PC-9 (cell line): ENCODE measurements at regions of chr2 and their contacts with region 1.

Region 1: DNA sequence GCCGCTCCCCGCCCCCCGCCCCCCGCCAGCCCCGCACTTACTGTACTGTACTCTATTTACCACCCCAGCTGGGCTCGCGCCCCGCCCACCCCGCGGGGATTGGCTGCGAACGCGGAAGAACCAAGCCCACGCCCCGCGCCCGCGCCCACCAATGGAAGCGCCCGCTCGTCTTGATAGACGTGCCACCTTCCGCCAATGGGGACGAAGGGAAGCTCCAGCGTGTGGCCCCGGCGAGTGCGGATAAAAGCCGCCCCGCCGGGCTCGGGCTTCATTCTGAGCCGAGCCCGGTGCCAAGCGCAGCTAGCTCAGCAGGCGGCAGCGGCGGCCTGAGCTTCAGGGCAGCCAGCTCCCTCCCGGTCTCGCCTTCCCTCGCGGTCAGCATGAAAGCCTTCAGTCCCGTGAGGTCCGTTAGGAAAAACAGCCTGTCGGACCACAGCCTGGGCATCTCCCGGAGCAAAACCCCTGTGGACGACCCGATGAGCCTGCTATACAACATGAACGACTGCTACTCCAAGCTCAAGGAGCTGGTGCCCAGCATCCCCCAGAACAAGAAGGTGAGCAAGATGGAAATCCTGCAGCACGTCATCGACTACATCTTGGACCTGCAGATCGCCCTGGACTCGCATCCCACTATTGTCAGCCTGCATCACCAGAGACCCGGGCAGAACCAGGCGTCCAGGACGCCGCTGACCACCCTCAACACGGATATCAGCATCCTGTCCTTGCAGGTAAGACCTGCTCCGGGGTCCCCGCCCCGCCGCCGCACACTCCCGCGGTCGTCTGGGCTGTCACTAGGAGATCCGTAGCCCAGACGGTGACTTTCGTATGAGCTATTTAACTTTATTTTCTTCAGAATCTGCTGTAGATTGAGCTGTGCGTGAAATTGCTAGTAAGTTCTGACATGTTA is at the start of gene ID2:
- DNase-seq: peak; percentile 82 to 91
- H3K4me3 ChIP-seq: peak within 1 kb of the TSS; percentile 59
- H3K27ac ChIP-seq: no peak within 1 kb of the TSS
- H3K4me1 ChIP-seq: no peaks in the 10 kb centered on the region; the same call in 1 of the 2 replicates
- H3K27me3 ChIP-seq: peaks cover 62% of the 10 kb centered on the region
- CTCF ChIP-seq: no peak
- total RNA-seq, gene ID2: 0.61 and 0.95 TPM in 2 replicates

Region 2: GRCh38 chr2:7203055-7203467 is 1479.0 kb before region 1 on chr2:
- CTCF ChIA-PET with region 1: no interaction called
- POLR2A ChIA-PET with region 1: no interaction called
- intact Hi-C with region 1: loop called (anchors 1 kb)
- DNase-seq: peak in 1 of 2 experiments; percentile 8
- H3K4me3 ChIP-seq: no peak overlapping the region
- H3K27ac ChIP-seq: no peak overlapping the region
- H3K4me1 ChIP-seq: no peaks in the 10 kb centered on the region
- H3K27me3 ChIP-seq: peaks cover 31% of the 10 kb centered on the region
- CTCF ChIP-seq: peak; percentile 93

Region 3: GRCh38 chr2:8525582-8526402 is 156.2 kb before region 1 on chr2:
- CTCF ChIA-PET with region 1: no interaction called
- POLR2A ChIA-PET with region 1: no interaction called
- intact Hi-C with region 1: loop called (anchors 5 kb)
- DNase-seq: peak in 1 of 2 experiments; percentile 43
- H3K4me3 ChIP-seq: no peak overlapping the region
- H3K27ac ChIP-seq: no peak overlapping the region
- H3K4me1 ChIP-seq: no peaks in the 10 kb centered on the region
- H3K27me3 ChIP-seq: peaks cover 92% of the 10 kb centered on the region
- CTCF ChIP-seq: no peak

Region 4: DNA sequence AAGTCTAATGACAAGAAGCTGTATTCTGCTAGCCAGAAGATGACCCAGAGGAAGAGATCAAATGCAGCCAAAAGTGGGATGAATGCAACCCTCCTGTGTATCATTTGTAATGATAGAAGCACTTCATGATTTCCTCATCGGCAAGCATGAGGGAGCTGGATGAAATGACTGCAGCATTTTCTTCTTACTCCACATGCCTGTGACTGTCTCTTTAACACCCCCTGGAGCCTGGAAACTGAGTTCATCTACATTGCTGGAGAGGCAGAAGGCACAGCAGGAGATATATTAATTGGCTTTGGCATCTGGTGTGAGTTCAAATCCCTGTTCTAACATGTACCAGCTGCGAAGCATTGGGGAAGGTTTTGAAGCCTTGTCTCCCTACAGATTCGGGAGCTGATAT is 37.5 kb after region 1 on chr2:
- CTCF ChIA-PET with region 1: no interaction called
- POLR2A ChIA-PET with region 1: no interaction called
- intact Hi-C with region 1: no loop called
- DNase-seq: no peak
- H3K4me3 ChIP-seq: no peak overlapping the region
- H3K27ac ChIP-seq: no peak overlapping the region
- H3K4me1 ChIP-seq: no peaks in the 10 kb centered on the region
- H3K27me3 ChIP-seq: no peaks in the 10 kb centered on the region
- CTCF ChIP-seq: no peak